Calu3 (cell line): ENCODE measurements at regions of chr3 and their contacts with region 1.

Region 1: GRCh38 chr3:25594007-25594502 is 70.7 kb downstream of the TOP2B start:
- DNase-seq: peak; percentile 35
- H3K4me3 Mint-ChIP-seq: no peak overlapping the region
- H3K27ac Mint-ChIP-seq: peak overlapping the region; percentile 15
- H3K4me1 Mint-ChIP-seq: peaks cover 18% of the 10 kb centered on the region
- H3K27me3 Mint-ChIP-seq: no peaks in the 10 kb centered on the region
- CTCF ChIP-seq: peak; percentile 67

Region 2: DNA sequence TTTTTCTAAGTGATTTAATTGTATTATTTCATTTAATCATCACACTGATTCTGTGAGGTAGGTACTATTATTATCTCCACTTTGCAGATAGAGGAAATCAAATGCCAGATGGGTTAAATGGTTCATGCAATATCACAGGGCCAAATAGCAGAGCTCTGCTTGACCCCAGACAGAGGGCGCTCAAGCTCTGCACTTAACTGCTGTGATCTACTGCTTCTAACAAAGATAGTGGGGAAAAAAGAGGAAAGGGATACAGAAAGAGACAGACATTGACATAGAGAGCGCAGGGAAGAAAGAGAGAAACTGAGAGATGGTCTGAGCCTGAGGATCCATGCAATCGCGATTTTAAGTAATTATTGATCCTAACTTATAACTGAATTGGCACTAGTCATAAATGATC is 820.3 kb before region 1 on chr3:
- CTCF ChIA-PET with region 1: interaction called, 9 read pairs
- intact Hi-C with region 1: loop called (anchors 1 kb)
- DNase-seq: peak; percentile 81
- H3K4me3 Mint-ChIP-seq: no peak overlapping the region
- H3K27ac Mint-ChIP-seq: no peak overlapping the region
- H3K4me1 Mint-ChIP-seq: peaks cover 8% of the 10 kb centered on the region
- H3K27me3 Mint-ChIP-seq: no peaks in the 10 kb centered on the region
- CTCF ChIP-seq: peak; percentile 65

Region 3: GRCh38 chr3:24963762-24964625 is 630.1 kb before region 1 on chr3:
- CTCF ChIA-PET with region 1: interaction called, 3 read pairs
- intact Hi-C with region 1: loop called (anchors 1 kb)
- DNase-seq: peak; percentile 7
- H3K4me3 Mint-ChIP-seq: no peak overlapping the region
- H3K27ac Mint-ChIP-seq: no peak overlapping the region
- H3K4me1 Mint-ChIP-seq: peaks cover 13% of the 10 kb centered on the region
- H3K27me3 Mint-ChIP-seq: no peaks in the 10 kb centered on the region
- CTCF ChIP-seq: no peak

Region 4: GRCh38 chr3:25021816-25022215 is 572.2 kb before region 1 on chr3:
- CTCF ChIA-PET with region 1: interaction called, 11 read pairs
- intact Hi-C with region 1: loop called (anchors 1 kb)
- DNase-seq: peak; percentile 5
- H3K4me3 Mint-ChIP-seq: no peak overlapping the region
- H3K27ac Mint-ChIP-seq: no peak overlapping the region
- H3K4me1 Mint-ChIP-seq: no peaks in the 10 kb centered on the region
- H3K27me3 Mint-ChIP-seq: no peaks in the 10 kb centered on the region
- CTCF ChIP-seq: peak; percentile 17

Region 5: DNA sequence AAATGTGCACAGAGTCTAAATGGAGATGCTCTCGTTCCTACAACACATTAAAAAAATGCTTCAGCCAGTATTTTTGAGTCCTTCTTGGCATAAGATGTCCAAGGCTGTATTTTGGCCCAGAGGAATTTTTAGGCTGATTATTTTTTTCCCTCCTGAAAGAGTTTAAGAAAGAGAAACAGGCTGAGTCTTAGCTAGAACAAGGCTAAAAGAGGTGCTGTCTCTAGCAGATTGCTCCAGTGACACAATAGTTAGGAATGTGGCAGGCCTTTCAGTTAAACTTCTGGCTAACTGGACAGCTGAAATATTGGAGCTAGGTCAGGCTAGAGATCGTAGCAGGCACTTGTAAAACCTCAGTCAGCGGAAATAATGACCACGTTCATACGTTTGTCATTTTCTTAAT is 437.4 kb before region 1 on chr3:
- CTCF ChIA-PET with region 1: no interaction called
- intact Hi-C with region 1: no loop called
- DNase-seq: peak; percentile 32
- H3K4me3 Mint-ChIP-seq: no peak overlapping the region
- H3K27ac Mint-ChIP-seq: no peak overlapping the region
- H3K4me1 Mint-ChIP-seq: peaks cover 25% of the 10 kb centered on the region
- H3K27me3 Mint-ChIP-seq: no peaks in the 10 kb centered on the region
- CTCF ChIP-seq: no peak

Region 6: DNA sequence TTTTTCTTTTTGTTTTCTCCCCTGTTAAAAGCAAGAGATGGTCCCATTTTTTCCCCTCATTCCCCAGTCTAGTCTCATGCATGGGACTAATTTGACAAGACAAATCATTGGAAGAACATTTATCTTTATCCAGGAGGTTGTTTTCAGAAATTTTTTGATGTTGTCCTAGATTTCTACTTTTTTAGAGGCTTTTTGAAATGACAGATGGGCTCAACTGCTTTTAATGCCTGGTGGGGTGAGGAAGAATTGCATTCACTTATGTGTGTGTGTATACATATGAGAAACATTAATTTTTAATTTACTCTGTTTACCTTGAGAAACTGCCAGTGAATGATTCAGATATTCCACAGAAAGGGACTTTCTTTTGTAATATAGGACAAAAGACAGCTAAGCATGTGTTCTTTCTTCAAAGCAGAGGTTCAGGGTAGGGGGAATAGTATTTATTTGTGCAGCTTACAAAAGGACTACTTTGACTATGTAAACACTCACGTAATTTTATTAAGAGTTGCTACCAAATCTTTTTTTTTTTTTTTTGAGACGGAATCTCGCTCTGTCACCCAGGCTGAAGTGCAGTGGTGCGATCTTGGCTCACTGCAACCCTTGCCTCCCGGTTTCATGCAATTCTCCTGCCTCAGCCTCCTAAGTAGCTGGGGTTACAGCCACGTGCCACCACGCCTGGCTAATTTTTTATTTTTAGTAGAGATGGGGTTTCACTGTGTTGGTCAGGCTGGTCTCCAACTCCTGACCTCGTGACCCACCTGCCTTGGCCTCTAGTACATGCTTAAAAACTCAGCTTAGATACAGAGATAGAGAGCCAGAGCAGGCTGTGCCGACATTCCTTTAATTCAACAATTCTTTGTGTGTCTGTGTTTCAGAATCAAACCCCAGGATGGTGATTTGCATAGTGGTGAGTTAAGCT is 296.1 kb before region 1 on chr3:
- CTCF ChIA-PET with region 1: no interaction called
- intact Hi-C with region 1: loop called (anchors 5 kb)
- DNase-seq: peak; percentile 25
- H3K4me3 Mint-ChIP-seq: peak overlapping the region; percentile 40
- H3K27ac Mint-ChIP-seq: peak overlapping the region; percentile 87
- H3K4me1 Mint-ChIP-seq: peaks cover 44% of the 10 kb centered on the region
- H3K27me3 Mint-ChIP-seq: no peaks in the 10 kb centered on the region
- CTCF ChIP-seq: no peak

Region 7: GRCh38 chr3:25427942-25428788 is 165.9 kb before region 1 on chr3 and contains the start of gene RARB:
- CTCF ChIA-PET with region 1: no interaction called
- intact Hi-C with region 1: loop called (anchors 1 kb)
- DNase-seq: peak; percentile 83
- H3K4me3 Mint-ChIP-seq: peak within 1 kb of the TSS; percentile 85
- H3K27ac Mint-ChIP-seq: peak within 1 kb of the TSS; percentile 91
- H3K4me1 Mint-ChIP-seq: peaks cover 33% of the 10 kb centered on the region
- H3K27me3 Mint-ChIP-seq: no peaks in the 10 kb centered on the region
- CTCF ChIP-seq: no peak
- total RNA-seq, gene RARB: 29.8 and 31.3 TPM in 2 replicates

Region 8: GRCh38 chr3:25455441-25456132 is 138.5 kb before region 1 on chr3:
- CTCF ChIA-PET with region 1: no interaction called
- intact Hi-C with region 1: loop called (anchors 5 kb)
- DNase-seq: no peak
- H3K4me3 Mint-ChIP-seq: peak overlapping the region; percentile 56
- H3K27ac Mint-ChIP-seq: peak overlapping the region; percentile 83
- H3K4me1 Mint-ChIP-seq: peaks cover 75% of the 10 kb centered on the region
- H3K27me3 Mint-ChIP-seq: no peaks in the 10 kb centered on the region
- CTCF ChIP-seq: no peak